ENCODE measurements at regions of chr9 and their contacts with region 1.

Region 1: DNA sequence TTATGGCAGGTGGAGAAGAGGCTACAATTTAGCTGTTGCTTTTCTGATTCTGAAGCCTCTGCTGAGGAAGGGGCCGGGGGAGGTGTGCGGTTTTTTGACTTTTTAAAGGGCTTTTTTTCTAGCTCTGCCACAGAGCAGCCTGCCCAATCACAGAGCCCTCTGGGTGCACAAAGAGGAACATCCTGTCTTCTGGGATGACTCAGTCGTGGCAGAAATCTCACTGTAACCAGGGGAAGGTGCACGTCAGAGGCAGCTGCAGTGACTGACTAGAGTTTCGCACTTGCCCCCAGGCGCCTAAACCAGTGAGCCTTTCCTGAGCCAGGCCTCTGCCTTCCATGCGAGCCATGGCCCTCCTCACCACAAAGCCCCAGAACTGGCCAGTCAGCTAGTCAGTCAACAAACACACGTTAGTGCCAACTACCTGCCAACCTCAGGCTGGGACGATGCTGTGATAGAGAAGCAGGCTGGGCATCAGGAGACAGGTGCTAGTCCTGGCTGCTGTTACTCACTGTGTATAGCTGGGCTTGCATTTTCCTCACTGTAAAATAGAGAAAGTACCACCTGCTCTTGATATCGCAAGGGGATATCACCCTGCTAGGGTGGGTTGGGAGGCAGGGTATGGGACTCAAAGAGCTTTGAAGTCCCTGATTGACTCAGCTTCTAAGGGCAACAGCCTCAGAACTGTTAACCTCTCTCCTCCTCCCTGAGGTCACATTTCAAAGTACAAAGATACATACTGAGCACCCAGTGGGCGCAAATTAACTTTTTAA is 2.2 kb downstream of the AKNA start:
- DNase-seq: peak; percentile 89
- H3K4me3 Mint-ChIP-seq: peak overlapping the region; percentile 99
- H3K27ac Mint-ChIP-seq: peak overlapping the region; percentile 99
- H3K4me1 Mint-ChIP-seq: peaks cover 68% of the 10 kb centered on the region
- H3K27me3 Mint-ChIP-seq: no peaks in the 10 kb centered on the region

Region 2: GRCh38 chr9:114339130-114339908 is 46.3 kb before region 1 on chr9:
- intact Hi-C with region 1: loop called (anchors 1 kb)
- DNase-seq: peak; percentile 37
- H3K4me3 Mint-ChIP-seq: no peak overlapping the region
- H3K27ac Mint-ChIP-seq: peak overlapping the region; percentile 0
- H3K4me1 Mint-ChIP-seq: peaks cover 9% of the 10 kb centered on the region
- H3K27me3 Mint-ChIP-seq: no peaks in the 10 kb centered on the region

Region 3: DNA sequence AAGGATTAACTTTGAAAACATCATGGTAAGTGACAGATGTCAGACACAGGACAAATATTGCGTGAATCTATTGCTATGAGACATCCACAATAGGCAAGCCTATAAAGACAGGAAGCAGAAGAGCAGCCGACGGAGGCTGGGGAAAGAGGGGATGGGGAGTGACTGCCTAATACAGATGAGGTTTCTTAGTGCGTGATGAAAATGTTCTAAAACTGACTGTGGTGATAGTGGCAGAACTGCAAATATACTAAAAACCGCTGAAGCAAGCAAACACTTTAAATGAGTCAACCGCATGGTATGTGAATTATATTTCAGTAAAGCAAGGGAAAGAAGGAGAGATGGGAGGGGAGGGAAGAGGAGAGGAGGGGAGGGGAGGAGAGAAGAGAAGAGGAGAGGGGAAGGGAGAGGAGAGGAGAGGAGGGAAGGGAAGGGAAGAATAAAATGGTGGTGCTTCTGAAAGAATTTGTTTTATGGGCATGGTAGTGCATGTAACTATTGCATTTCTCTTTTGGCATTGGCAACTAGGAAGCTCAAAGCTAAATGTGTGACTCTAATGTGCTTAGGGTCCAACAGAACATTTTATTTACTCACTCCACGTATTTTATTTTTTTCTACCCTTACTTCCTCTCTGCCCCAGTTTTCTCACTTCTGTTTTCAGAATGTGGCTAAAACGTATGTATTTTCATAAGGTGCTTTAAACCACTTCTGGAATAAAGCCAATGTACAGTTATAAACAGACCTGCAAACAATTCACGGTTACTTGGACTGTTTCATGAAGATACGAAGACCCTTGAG is 19.1 kb before region 1 on chr9:
- intact Hi-C with region 1: loop called (anchors 1 kb)
- DNase-seq: peak; percentile 35
- H3K4me3 Mint-ChIP-seq: peak overlapping the region; percentile 69
- H3K27ac Mint-ChIP-seq: peak overlapping the region; percentile 90
- H3K4me1 Mint-ChIP-seq: peaks cover 74% of the 10 kb centered on the region
- H3K27me3 Mint-ChIP-seq: no peaks in the 10 kb centered on the region

Region 4: DNA sequence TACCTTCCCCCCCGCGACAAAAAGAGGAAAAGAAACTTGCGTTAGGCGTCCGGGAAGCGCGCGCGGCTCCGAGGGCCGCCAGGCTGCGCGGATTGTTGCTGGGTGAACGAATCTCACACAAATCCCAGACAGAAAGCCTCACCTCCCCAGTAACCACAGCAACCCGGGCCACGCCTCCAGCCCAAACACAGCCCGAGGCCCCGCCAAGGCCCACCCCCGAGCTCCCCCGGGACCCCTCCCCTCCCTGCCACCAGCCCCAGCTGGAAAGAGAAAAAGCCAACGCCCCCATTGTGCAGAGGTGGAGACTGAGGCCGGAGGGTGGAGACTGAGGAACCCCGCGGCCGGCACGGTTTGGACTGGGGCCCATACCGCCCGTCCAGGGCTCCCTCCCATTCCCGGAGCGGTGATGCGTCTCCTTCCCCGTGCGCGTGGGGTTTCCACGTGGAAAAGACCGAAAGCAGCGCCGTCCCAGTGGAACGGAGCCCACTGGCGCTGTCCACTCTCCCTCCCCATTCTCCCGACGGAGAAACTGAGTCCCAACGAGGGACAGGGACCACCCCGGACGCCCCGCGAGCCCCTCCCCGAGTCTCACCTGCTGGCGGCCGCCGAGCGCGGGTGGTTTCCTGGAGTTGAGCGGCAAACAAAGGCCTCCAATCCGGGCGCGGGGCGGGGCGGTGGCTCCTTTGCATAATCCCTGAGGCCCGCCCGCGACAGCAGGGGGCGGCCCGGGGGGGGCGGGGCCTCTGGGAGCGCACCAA is 12.4 kb after region 1 on chr9:
- intact Hi-C with region 1: loop called (anchors 1 kb)
- DNase-seq: peak; percentile 92
- H3K4me3 Mint-ChIP-seq: peak overlapping the region; percentile 85
- H3K27ac Mint-ChIP-seq: peak overlapping the region; percentile 73
- H3K4me1 Mint-ChIP-seq: peaks cover 31% of the 10 kb centered on the region
- H3K27me3 Mint-ChIP-seq: no peaks in the 10 kb centered on the region

Region 5: DNA sequence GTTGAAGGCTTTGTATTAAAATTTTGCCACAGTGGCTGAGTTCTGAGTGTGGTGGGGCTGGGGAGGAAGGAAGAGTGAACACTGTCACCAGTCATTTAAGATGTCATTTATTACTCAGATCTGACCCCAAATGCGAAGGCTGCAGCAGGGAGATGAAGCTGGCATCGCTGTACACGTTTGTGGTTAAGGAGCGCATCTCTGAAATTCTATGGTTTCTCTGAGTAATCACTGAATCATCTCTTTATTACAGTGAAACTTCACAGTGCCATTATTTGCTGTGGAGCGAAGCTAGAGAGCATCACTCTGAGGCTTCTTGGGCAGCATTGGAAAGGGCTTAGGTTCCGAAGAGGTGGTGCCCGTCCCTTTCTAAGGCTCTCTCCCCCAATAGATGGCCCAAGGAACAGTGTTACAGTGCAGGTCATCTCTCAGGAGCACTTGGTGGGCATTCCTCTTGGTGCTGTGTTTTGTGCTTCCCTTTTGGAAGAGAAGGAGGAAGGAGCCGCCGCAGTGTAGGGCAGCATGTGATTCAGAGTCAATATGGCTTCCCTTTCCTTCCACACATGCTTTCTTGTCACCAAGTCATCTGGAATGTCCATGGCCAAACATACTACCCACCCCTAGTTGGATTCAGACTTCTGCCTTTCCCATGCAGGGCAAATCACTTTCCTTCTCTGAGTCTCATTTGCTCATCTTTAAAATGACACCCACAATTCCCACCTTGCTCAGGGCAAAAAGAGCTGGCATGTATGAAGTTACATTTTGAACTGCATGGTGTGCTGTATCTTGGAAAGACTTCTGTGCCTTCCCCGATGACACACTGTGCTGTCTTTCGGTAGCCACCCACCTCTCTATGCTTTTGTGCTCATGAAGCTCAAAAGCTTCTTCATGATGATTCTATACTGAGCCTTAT is 305.7 kb after region 1 on chr9:
- intact Hi-C with region 1: loop called (anchors 1 kb)
- DNase-seq: peak; percentile 82
- H3K4me3 Mint-ChIP-seq: peak overlapping the region; percentile 43
- H3K27ac Mint-ChIP-seq: peak overlapping the region; percentile 98
- H3K4me1 Mint-ChIP-seq: peaks cover 93% of the 10 kb centered on the region
- H3K27me3 Mint-ChIP-seq: no peaks in the 10 kb centered on the region

Region 6: GRCh38 chr9:114894801-114895433 is 509.3 kb after region 1 on chr9:
- intact Hi-C with region 1: loop called (anchors 10 kb)
- DNase-seq: no peak
- H3K4me3 Mint-ChIP-seq: no peak overlapping the region
- H3K27ac Mint-ChIP-seq: peak overlapping the region; percentile 84
- H3K4me1 Mint-ChIP-seq: peaks cover 50% of the 10 kb centered on the region
- H3K27me3 Mint-ChIP-seq: no peaks in the 10 kb centered on the region